Sigmoid colon (tissue), 7 donors: ENCODE measurements at regions of chr7 and their contacts with region 1.

Region 1: GRCh38 chr7:7607010-7607409 is 33.5 kb upstream of the UMAD1 start:
- DNase-seq: no peak
- H3K4me3 ChIP-seq: no peak overlapping the region
- H3K27ac ChIP-seq: no peak overlapping the region
- H3K4me1 ChIP-seq: no peaks in the 10 kb centered on the region
- H3K27me3 ChIP-seq: no peaks in the 10 kb centered on the region
- CTCF ChIP-seq: no peak
- EP300 ChIP-seq: no peak
- POLR2A ChIP-seq: no peak

Region 2: GRCh38 chr7:7581531-7582179 is 25.4 kb before region 1 on chr7:
- intact Hi-C with region 1: loop called (anchors 1 kb)
- DNase-seq: no peak
- H3K4me3 ChIP-seq: no peak overlapping the region
- H3K27ac ChIP-seq: no peak overlapping the region
- H3K4me1 ChIP-seq: peaks cover 0 to 6% (median 0%) of the 10 kb centered on the region in 4 donors
- H3K27me3 ChIP-seq: no peaks in the 10 kb centered on the region
- CTCF ChIP-seq: no peak
- EP300 ChIP-seq: no peak
- POLR2A ChIP-seq: no peak

Region 3: DNA sequence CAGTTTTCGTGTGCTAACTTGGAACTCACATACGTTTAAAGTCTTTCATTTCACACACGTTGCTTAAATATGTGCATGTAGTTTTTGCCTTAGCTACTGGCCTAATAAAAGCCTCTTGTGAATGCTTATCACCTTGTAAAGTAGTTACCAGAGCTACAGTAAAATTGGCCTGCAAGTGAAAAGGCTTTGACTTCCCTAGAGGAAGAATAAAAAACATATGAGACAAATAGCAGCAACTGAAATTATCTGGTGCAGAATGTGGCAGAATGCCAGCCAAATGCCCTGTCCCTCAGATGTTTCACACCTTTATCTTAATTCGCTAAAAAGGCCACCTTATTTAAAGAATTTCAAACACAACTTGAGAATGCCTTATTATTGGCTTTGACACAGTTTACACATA is 139.4 kb after region 1 on chr7:
- intact Hi-C with region 1: no loop called
- DNase-seq: no peak
- H3K4me3 ChIP-seq: no peak overlapping the region
- H3K27ac ChIP-seq: no peak overlapping the region
- H3K4me1 ChIP-seq: peaks cover 0 to 27% (median 24%) of the 10 kb centered on the region in 4 donors
- H3K27me3 ChIP-seq: no peaks in the 10 kb centered on the region
- CTCF ChIP-seq: no peak
- EP300 ChIP-seq: no peak
- POLR2A ChIP-seq: no peak

Region 4: DNA sequence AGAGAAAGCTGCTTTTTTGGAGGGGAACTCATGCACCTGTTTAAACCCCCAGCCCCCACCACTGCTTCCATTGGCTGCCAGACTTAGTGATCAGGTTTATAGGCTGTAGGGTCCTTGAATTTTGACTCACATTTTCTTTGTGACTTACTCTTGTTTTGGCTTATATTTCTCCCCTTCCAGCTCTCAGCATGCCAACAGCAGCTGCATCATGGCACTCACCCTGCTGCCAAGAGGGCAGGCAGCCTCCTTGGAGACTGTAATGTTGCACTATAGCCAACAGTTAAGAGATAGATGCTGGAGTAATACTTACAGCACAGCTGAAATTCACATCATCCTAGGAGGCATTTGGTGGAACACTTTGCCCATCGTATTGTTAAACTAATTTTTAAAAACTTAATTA is 263.5 kb after region 1 on chr7:
- intact Hi-C with region 1: no loop called
- DNase-seq: no peak
- H3K4me3 ChIP-seq: no peak overlapping the region
- H3K27ac ChIP-seq: no peak overlapping the region
- H3K4me1 ChIP-seq: peaks cover 0 to 11% (median 0%) of the 10 kb centered on the region in 4 donors
- H3K27me3 ChIP-seq: no peaks in the 10 kb centered on the region
- CTCF ChIP-seq: no peak
- EP300 ChIP-seq: no peak
- POLR2A ChIP-seq: no peak